MCF 10A (cell line): ENCODE measurements at regions of chr4 and their contacts with region 1.

Region 1: DNA sequence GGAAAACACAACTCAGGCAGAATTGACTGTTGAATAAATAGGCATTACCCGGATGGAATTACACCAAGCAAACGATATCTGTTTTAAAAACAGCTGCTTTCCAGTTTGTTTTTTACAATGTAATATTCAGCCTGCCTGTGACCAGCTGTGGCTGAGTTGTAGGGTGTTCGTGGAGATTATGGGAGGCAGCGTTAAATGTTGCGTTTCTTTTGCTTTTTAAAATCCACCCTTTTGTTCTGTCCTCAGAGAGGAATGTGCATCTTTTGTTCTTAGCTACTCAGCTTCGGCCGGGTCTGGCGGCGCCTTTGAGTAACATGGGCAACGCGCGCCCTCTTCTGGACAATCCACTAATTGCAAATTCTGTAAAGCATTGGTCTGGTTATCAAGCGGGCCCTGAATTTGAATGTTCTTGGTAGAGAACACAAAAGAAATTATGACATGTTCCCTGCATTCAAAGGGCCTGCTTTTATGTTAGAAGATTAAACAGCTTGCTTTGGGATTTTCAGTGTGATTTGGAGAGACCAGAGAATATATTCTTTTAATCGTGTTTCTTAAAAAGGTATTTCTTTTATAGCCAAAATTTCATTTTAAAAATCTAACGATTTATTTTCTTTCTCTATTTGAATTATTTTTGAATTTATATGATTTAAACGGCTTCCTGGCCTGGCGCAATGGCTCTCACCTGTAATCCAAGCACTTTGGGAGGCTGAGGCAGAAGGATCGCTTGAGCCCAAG is 76.3 kb upstream of the TRIM2 start:
- DNase-seq: peak; percentile 86
- H3K4me3 Mint-ChIP-seq: no peak overlapping the region
- H3K27ac Mint-ChIP-seq: no peak overlapping the region
- H3K4me1 Mint-ChIP-seq: no peaks in the 10 kb centered on the region
- H3K27me3 Mint-ChIP-seq: no peaks in the 10 kb centered on the region
- CTCF ChIP-seq: peak; percentile 67

Region 2: GRCh38 chr4:152843481-152844090 is 284.3 kb before region 1 on chr4:
- CTCF ChIA-PET with region 1: interaction called, 57 read pairs
- POLR2A ChIA-PET with region 1: interaction called, 9 read pairs
- intact Hi-C with region 1: loop called (anchors 1 kb)
- DNase-seq: no peak
- H3K4me3 Mint-ChIP-seq: no peak overlapping the region
- H3K27ac Mint-ChIP-seq: no peak overlapping the region
- H3K4me1 Mint-ChIP-seq: no peaks in the 10 kb centered on the region
- H3K27me3 Mint-ChIP-seq: no peaks in the 10 kb centered on the region
- CTCF ChIP-seq: no peak

Region 3: DNA sequence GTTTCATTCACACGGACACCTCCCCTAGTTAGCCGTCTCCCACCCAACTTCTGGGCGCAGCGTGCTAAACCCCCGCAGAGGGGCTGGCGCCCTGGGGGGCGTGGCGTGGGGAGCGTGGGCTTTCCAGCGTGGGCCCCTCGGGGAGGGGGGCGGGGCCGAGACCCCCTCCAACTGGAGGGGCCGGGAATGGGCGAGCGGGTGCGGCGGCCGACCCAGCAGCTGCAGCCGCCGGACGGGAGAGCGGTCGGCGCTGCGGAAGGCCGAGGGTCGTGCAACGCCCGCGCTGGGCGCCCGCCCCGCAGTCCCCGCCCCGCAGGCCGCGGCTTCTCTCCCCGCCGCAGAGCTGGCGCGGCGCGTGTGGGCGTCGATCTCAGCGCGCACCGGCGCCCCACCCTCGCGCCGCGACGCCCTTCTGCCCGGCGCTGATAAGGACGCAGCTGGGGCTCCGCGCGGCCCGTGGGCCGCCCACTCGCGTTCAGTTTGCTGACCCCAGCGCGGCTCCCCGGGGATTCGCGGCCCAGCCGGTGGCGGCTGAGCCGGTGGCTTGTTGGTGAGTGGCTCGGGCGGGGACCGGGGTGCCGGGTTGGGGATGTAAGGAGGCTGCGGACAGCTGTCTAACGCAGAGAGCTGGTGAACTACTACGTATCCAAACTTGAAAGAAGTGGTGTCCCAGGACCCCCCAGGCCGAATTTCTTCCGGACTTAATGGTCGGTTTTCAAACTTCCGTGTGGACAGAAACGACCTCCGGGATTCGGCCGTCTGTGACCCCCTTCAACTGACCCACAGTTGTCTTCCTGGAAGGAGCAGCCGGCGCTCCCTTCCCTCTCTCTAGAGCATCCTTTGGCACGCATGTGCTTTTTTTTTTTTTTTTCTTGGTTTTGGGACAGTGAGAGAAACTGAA is 190.3 kb before region 1 on chr4:
- CTCF ChIA-PET with region 1: interaction called, 4 read pairs
- POLR2A ChIA-PET with region 1: interaction called, 4 read pairs
- intact Hi-C with region 1: loop called (anchors 2 kb)
- DNase-seq: peak; percentile 42
- H3K4me3 Mint-ChIP-seq: peak overlapping the region; percentile 84
- H3K27ac Mint-ChIP-seq: peak overlapping the region; percentile 2
- H3K4me1 Mint-ChIP-seq: peaks cover 16% of the 10 kb centered on the region
- H3K27me3 Mint-ChIP-seq: no peaks in the 10 kb centered on the region
- CTCF ChIP-seq: no peak

Region 4: GRCh38 chr4:153060196-153060595 is 67.7 kb before region 1 on chr4:
- CTCF ChIA-PET with region 1: interaction called, 14 read pairs
- POLR2A ChIA-PET with region 1: no interaction called
- intact Hi-C with region 1: no loop called
- DNase-seq: no peak
- H3K4me3 Mint-ChIP-seq: no peak overlapping the region
- H3K27ac Mint-ChIP-seq: no peak overlapping the region
- H3K4me1 Mint-ChIP-seq: no peaks in the 10 kb centered on the region
- H3K27me3 Mint-ChIP-seq: peaks cover 35% of the 10 kb centered on the region
- CTCF ChIP-seq: no peak

Region 5: DNA sequence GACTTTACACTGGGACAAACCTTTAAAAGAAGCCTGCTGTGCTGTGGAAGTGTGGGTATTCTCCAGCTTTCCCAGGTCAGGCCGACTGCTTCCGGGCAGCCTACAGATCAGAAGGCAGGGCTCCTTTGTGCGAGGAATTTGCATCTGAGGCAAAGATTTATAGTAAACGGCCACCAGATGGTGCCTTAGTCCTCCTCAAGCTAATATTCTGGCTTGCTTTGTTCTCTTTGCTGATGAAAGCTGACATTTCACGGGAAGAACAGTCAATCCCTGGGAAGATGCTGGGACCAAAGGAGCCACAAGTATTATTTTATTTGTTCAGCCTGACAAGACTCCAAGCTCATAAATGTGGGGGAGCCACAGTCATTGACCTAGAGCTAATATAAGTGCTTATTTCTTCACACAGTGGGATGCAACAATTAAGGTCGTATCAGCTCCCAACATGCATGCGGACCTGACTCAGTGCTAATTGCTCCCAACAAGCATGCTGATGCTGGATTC is 44.4 kb before region 1 on chr4:
- CTCF ChIA-PET with region 1: interaction called, 235 read pairs
- POLR2A ChIA-PET with region 1: interaction called, 8 read pairs
- intact Hi-C with region 1: loop called (anchors 1 kb)
- DNase-seq: peak; percentile 83
- H3K4me3 Mint-ChIP-seq: no peak overlapping the region
- H3K27ac Mint-ChIP-seq: peak overlapping the region; percentile 67
- H3K4me1 Mint-ChIP-seq: peaks cover 15% of the 10 kb centered on the region
- H3K27me3 Mint-ChIP-seq: no peaks in the 10 kb centered on the region
- CTCF ChIP-seq: peak; percentile 57

Region 6: DNA sequence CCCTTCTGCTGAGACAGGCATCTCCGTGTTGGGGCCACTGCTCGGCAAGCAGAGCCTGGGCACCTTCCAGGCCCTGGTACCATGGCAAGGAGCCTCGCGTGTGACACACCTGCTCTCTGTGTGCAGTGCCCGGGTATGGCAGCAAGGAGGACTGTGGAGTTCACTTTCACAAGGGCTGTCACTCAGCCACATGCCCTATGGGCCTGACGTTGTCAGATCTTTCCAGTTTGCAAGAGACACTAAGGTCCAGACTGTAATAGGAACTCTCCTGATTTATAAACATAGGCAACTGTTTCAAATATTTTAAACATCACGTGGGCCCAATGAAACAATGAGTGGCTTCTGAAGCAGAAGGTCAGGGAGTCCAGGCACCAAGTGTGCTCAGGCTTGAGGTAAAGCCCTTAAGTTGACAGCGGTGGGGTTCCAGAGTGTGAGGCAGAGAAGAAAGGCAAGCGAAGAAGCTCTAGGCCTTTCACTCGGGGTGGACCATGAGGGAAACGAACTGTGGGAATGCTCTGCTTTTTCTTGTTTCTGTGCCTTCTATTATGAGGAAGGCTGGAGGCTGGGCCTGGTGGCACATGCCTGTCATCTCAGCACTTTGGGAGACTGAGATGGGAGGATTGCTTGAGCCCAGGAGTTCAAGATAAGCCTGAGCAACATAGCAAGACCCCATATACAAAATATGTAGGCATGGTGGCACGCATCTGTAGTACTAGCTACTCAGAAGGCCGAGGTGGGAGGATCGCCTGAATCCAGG is 32.3 kb before region 1 on chr4:
- CTCF ChIA-PET with region 1: interaction called, 18 read pairs
- POLR2A ChIA-PET with region 1: no interaction called
- intact Hi-C with region 1: no loop called
- DNase-seq: no peak
- H3K4me3 Mint-ChIP-seq: no peak overlapping the region
- H3K27ac Mint-ChIP-seq: no peak overlapping the region
- H3K4me1 Mint-ChIP-seq: no peaks in the 10 kb centered on the region
- H3K27me3 Mint-ChIP-seq: no peaks in the 10 kb centered on the region
- CTCF ChIP-seq: no peak

Region 7: GRCh38 chr4:153115322-153116290 is 12.3 kb before region 1 on chr4:
- CTCF ChIA-PET with region 1: interaction called, 59 read pairs
- POLR2A ChIA-PET with region 1: no interaction called
- intact Hi-C with region 1: no loop called
- DNase-seq: peak; percentile 67
- H3K4me3 Mint-ChIP-seq: no peak overlapping the region
- H3K27ac Mint-ChIP-seq: no peak overlapping the region
- H3K4me1 Mint-ChIP-seq: no peaks in the 10 kb centered on the region
- H3K27me3 Mint-ChIP-seq: no peaks in the 10 kb centered on the region
- CTCF ChIP-seq: no peak